ENCODE measurements at regions of chr2 and their contacts with region 1.

Region 1: GRCh38 chr2:190847504-190848081 is 33.0 kb upstream of the GLS start:
- DNase-seq: no peak
- ATAC-seq: no peak
- H3K4me3 ChIP-seq: no peak overlapping the region
- H3K27ac ChIP-seq: no peak overlapping the region
- H3K4me1 ChIP-seq: peaks cover 0 to 13% (median 6%) of the 10 kb centered on the region in 12 donors
- H3K27me3 ChIP-seq: no peaks in the 10 kb centered on the region
- CTCF ChIP-seq: no peak
- POLR2A ChIP-seq: no peak

Region 2: GRCh38 chr2:190863946-190864345 is 16.4 kb after region 1 on chr2:
- intact Hi-C with region 1: loop called in 1 of 10 experiments (anchors 2 kb)
- DNase-seq: peak in 1 of 5 donors; percentile 42
- ATAC-seq: peak; percentile 56 to 90 (median 74)
- H3K4me3 ChIP-seq: no peak overlapping the region
- H3K27ac ChIP-seq: no peak overlapping the region
- H3K4me1 ChIP-seq: peaks cover 0 to 25% (median 8%) of the 10 kb centered on the region in 12 donors
- H3K27me3 ChIP-seq: no peaks in the 10 kb centered on the region
- CTCF ChIP-seq: no peak
- POLR2A ChIP-seq: no peak